Natural killer cell (primary cell): ENCODE measurements at regions of chr20 and their contacts with region 1.

Region 1: DNA sequence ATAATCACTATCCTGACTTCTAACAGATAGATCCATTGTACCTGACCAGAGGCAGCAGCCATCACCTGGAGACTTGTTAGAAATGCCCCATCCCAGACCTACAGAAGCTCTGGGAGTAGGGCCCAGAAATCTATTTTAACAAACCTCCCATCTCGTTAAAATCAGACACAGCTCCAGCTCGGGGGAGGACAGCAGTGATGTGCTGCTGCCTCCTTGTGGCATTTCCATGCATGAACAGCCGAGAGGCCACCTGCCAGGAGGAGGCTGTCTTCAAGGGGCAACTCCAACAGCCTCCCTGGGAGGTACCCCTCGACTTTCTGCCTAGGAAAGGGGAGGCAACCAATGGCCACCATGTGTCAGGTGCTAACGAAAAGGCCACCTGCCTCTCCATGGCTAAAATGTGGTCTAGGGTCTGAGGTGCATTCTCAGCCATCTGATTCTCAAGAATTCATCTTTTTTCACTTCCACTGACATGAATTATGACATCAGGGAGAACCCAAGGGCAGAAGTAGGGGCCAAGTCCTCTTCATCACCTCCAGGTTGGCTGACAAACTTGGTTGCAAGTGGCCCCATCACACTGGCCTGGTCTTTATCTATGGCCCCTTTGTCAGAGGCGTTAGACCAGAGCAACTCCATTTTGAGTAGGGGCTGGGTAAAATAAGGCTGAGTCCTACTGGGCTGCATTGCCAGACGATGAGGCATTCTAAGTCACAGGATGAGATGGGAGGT is 12.2 kb upstream of the KCNK15 start:
- DNase-seq: peak; percentile 45 to 81
- ATAC-seq: peak; percentile 55 to 84 (median 80)
- H3K4me3 ChIP-seq: no peak overlapping the region
- H3K4me3 Mint-ChIP-seq: no peak overlapping the region
- H3K27ac ChIP-seq: no peak overlapping the region
- H3K27ac Mint-ChIP-seq: no peak overlapping the region
- H3K4me1 ChIP-seq: peaks cover 4% of the 10 kb centered on the region
- H3K4me1 Mint-ChIP-seq: peaks cover 12 to 20% of the 10 kb centered on the region in 2 donors
- H3K27me3 ChIP-seq: no peaks in the 10 kb centered on the region
- H3K27me3 Mint-ChIP-seq: peaks cover 4 to 7% of the 10 kb centered on the region in 2 donors
- CTCF ChIP-seq: peak; percentile 68

Region 2: DNA sequence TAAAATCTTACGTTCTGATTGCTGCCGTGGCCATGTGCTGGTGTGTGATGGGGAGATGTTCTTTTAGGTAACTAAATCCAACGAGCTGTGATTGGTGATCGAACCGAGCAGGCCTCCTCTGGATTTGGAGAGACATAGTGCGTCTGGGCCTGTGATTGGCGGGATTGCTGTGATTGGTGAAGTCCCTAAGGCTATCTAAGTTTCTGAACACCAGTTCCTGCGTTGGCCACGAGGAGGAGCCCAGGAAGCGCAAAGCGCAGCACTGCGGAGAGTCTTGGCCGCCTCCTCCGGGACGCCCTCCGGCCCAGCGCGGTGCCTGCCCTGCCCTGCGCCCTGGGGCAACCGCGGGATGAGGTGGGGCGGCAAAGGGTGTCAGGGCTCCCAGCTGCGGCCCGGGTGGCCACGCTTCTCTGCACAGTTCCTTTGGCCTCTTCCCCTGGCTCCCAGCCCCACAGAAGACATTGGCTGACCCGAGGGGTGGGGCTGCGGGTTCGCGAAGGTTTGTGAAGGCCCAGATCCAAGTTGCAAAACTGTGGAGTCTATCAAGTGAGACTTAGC is 345.0 kb before region 1 on chr20:
- intact Hi-C with region 1: loop called (anchors 1 kb)
- DNase-seq: peak; percentile 61 to 79
- ATAC-seq: peak; percentile 73 to 90 (median 86)
- H3K4me3 ChIP-seq: no peak overlapping the region
- H3K4me3 Mint-ChIP-seq: no peak overlapping the region
- H3K27ac ChIP-seq: no peak overlapping the region
- H3K27ac Mint-ChIP-seq: no peak overlapping the region
- H3K4me1 ChIP-seq: peaks cover 6% of the 10 kb centered on the region
- H3K4me1 Mint-ChIP-seq: peaks cover 11 to 24% of the 10 kb centered on the region in 2 donors
- H3K27me3 ChIP-seq: peaks cover 3% of the 10 kb centered on the region
- H3K27me3 Mint-ChIP-seq: peaks cover 7 to 10% of the 10 kb centered on the region in 2 donors
- CTCF ChIP-seq: peak; percentile 72